ENCODE measurements at regions of chr15 and their contacts with region 1.

Region 1: GRCh38 chr15:91271565-91272153 is 171.6 kb downstream of the SV2B start:
- DNase-seq: peak in 1 of 2 donors; percentile 39
- ATAC-seq: peak; percentile 65 to 90
- H3K4me3 ChIP-seq: no peak overlapping the region
- H3K27ac ChIP-seq: no peak overlapping the region
- H3K4me1 ChIP-seq: peaks cover 0 to 3% of the 10 kb centered on the region in 2 donors
- H3K27me3 ChIP-seq: no peaks in the 10 kb centered on the region
- CTCF ChIP-seq: peak; percentile 75 to 78 (median 75)
- POLR2A ChIP-seq: no peak

Region 2: DNA sequence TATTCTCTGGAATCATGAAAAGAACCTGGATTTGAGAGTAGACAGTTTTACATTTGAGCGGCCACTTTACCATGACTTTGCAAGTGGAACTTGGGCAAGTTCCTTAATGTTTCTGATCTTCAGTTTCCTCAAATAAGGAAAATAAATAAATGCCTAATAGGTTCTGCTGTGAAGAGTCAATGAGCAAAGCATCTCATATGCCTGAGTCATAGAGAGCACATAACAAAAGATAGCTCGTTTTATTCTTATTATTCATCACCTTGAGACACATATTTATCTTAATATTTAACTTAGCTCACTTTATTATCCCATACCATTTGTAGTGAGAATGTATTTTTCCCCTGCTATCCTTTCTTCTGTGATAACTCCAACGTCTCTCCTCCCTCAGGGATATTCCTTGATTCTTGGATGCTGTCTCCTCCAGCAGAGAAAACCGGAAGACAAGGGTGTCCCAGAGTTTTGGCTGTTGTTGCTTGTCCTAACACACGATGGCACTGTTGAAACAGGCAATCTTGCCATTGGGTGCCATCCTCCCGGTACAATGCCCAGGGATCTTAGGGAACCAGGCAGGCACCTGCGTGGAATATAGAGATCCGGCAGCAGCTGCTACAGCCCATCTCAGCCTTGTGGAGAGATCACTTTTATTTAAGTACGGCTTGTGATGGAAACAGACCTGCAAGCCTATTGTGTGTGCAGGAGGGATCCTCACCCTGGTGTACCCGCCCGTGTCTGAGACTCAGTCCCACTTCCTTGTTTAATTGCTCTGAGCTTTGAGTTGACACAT is 215.9 kb before region 1 on chr15:
- in situ Hi-C with region 1: loop called (anchors 5 kb)
- intact Hi-C with region 1: loop called (anchors 1 kb)
- DNase-seq: peak; percentile 30 to 56
- ATAC-seq: peak; percentile 89 to 92
- H3K4me3 ChIP-seq: no peak overlapping the region
- H3K27ac ChIP-seq: no peak overlapping the region
- H3K4me1 ChIP-seq: no peaks in the 10 kb centered on the region
- H3K27me3 ChIP-seq: peaks cover 4 to 12% (median 8%) of the 10 kb centered on the region in 3 donors
- CTCF ChIP-seq: peak; percentile 53 to 83 (median 72)
- POLR2A ChIP-seq: no peak

Region 3: GRCh38 chr15:91224755-91225380 is 46.8 kb before region 1 on chr15:
- in situ Hi-C with region 1: no loop called
- intact Hi-C with region 1: loop called (anchors 2 kb)
- DNase-seq: no peak
- ATAC-seq: peak; percentile 69
- H3K4me3 ChIP-seq: no peak overlapping the region
- H3K27ac ChIP-seq: no peak overlapping the region
- H3K4me1 ChIP-seq: no peaks in the 10 kb centered on the region
- H3K27me3 ChIP-seq: no peaks in the 10 kb centered on the region
- CTCF ChIP-seq: peak; percentile 43 to 71 (median 61)
- POLR2A ChIP-seq: no peak

Region 4: DNA sequence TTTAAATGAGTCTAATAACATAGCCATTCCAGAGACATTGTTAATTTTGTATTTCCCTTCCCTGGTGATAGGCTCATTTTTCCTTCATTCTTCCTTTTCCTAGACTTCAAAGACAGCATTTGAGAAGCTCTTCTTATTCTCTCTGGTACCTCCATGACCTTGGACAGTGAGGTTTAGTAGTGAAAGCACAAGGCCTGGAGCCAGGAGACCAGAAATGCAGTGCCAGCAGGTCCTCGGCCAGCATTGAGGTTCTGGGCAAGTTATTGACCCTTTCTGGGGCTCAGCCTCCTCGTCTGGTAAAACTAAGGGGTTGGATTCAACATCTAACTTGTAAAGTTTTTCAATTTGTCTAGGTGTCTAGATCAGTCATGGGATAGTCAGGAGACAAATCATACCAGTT is 24.7 kb before region 1 on chr15:
- in situ Hi-C with region 1: no loop called
- intact Hi-C with region 1: loop called (anchors 1 kb)
- DNase-seq: no peak
- ATAC-seq: no peak
- H3K4me3 ChIP-seq: no peak overlapping the region
- H3K27ac ChIP-seq: no peak overlapping the region
- H3K4me1 ChIP-seq: no peaks in the 10 kb centered on the region
- H3K27me3 ChIP-seq: no peaks in the 10 kb centered on the region
- CTCF ChIP-seq: no peak
- POLR2A ChIP-seq: no peak

Measured in gastrocnemius medialis (tissue), 4 donors.